Ovary (tissue), 10 donors: ENCODE measurements at regions of chr6 and their contacts with region 1.

Region 1: DNA sequence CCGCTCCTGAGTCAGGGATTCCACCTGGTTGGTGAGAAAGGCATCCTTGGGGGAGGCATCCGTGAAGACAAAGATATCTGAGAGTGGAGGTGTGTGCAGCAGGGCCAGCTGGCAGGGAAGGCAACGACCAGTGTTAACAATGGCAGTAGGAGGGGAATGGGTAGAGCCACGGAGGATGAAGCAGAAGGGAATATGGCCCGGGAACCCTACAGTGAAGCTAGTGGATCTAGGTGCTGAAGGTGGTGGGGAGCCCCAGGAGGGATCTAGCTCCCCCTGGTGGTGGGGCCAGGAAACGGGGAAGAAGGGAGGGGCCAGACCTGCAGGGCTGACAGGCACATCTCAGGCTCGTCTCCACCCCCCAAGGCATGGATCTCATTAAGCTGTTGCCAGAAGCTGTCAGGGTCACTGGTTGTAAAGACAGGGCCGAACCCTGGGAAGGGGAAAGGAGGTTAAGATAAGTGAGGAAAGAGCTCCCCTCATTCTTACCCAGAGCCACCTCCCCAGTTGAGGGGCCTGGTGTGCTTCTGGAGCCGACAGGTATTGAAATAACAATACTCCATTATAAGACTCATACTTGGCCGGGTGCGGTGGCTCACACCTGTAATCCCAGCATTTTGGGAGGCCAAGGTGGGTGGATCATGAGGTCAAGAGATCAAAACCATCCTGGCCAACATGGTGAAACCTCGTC is 7.3 kb downstream of the VWA7 start:
- DNase-seq: no peak
- H3K4me3 ChIP-seq: no peak overlapping the region
- H3K27ac ChIP-seq: no peak overlapping the region
- H3K4me1 ChIP-seq: peaks cover 3% of the 10 kb centered on the region
- H3K27me3 ChIP-seq: no peaks in the 10 kb centered on the region
- CTCF ChIP-seq: no peak
- EP300 ChIP-seq: no peak
- POLR2A ChIP-seq: no peak

Region 2: GRCh38 chr6:31723245-31723979 is 46.4 kb before region 1 on chr6 and contains the start of gene MPIG6B:
- intact Hi-C with region 1: loop called in 1 of 4 experiments (anchors 2 kb)
- DNase-seq: no peak
- H3K4me3 ChIP-seq: no peak within 1 kb of the TSS
- H3K27ac ChIP-seq: no peak within 1 kb of the TSS
- H3K4me1 ChIP-seq: peaks cover 2% of the 10 kb centered on the region
- H3K27me3 ChIP-seq: no peaks in the 10 kb centered on the region
- CTCF ChIP-seq: no peak
- EP300 ChIP-seq: no peak
- POLR2A ChIP-seq: no peak
- total RNA-seq, gene MPIG6B: 0.15 to 0.94 (median 0.69) TPM in 3 of 7 donors, not detected in the others

Region 3: DNA sequence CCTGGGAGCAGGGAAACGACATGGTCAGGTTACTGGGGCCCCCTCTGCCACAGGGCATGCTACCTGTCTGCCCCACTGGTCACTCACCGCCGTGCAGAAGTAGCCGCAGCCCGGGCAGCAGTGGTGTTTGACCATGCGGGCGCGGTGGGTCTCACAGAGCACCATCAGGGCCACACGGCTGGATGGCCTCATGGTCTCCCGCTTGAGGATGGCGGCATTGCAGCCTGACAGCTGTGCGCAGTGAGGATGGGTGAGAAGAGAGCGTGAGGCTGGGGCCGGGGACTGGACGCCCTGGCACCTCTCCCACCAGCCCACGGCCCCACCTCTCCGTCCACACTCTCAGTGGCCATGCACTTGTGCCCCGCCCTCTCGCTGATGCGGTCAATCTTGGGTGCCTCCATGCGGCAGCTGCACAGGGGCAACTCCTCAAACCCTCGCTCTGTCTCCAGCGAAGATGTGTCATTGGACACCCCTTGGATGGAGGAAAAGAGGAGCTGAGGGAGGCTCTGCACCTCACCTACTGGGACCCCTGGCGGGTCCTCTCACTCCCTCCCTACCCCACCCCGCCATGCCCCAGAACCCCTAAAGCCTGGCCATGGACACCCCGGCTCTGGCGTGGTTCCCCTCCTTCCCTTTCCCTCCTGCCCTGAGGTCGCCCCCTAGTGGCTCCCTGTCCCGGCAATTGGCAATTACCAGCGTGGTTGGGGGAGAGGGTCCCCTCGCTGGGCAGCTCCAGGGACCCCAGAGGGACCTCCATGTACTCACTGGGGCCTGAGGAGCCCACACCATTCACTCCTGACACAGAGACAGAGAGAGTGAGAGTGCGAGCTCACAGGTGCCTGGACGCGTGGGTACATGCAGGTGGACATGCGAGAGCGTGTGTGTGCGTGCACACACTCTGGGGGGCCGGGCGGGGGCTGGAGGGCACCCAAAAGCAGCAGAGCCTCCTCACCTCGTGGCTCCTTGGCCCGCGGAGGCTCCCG is 118.7 kb after region 1 on chr6:
- intact Hi-C with region 1: no loop called
- DNase-seq: peak in 1 of 5 donors; percentile 58
- H3K4me3 ChIP-seq: no peak overlapping the region
- H3K27ac ChIP-seq: no peak overlapping the region
- H3K4me1 ChIP-seq: no peaks in the 10 kb centered on the region
- H3K27me3 ChIP-seq: no peaks in the 10 kb centered on the region
- CTCF ChIP-seq: peak in 1 of 3 donors; percentile 41
- EP300 ChIP-seq: no peak
- POLR2A ChIP-seq: no peak

Region 4: GRCh38 chr6:32290886-32291450 is 521.1 kb after region 1 on chr6:
- intact Hi-C with region 1: no loop called
- DNase-seq: no peak
- H3K4me3 ChIP-seq: no peak overlapping the region
- H3K27ac ChIP-seq: no peak overlapping the region
- H3K4me1 ChIP-seq: no peaks in the 10 kb centered on the region
- H3K27me3 ChIP-seq: no peaks in the 10 kb centered on the region
- CTCF ChIP-seq: no peak
- EP300 ChIP-seq: no peak
- POLR2A ChIP-seq: no peak